OCI-LY7 (cell line): ENCODE measurements at regions of chr3 and their contacts with region 1.

Region 1: GRCh38 chr3:188421836-188422540 is 268.0 kb downstream of the LPP start:
- DNase-seq: peak; percentile 94
- H3K4me3 ChIP-seq: peak overlapping the region; percentile 53
- H3K27ac ChIP-seq: peak overlapping the region; percentile 88
- H3K4me1 ChIP-seq: peaks cover 52% of the 10 kb centered on the region
- CTCF ChIP-seq: no peak

Region 2: GRCh38 chr3:188432802-188433520 is 11.0 kb after region 1 on chr3:
- CTCF ChIA-PET with region 1: interaction called, 8 read pairs
- POLR2A ChIA-PET with region 1: interaction called, 16 read pairs
- intact Hi-C with region 1: no loop called
- DNase-seq: no peak
- H3K4me3 ChIP-seq: no peak overlapping the region
- H3K27ac ChIP-seq: no peak overlapping the region
- H3K4me1 ChIP-seq: peaks cover 18% of the 10 kb centered on the region
- CTCF ChIP-seq: no peak

Region 3: DNA sequence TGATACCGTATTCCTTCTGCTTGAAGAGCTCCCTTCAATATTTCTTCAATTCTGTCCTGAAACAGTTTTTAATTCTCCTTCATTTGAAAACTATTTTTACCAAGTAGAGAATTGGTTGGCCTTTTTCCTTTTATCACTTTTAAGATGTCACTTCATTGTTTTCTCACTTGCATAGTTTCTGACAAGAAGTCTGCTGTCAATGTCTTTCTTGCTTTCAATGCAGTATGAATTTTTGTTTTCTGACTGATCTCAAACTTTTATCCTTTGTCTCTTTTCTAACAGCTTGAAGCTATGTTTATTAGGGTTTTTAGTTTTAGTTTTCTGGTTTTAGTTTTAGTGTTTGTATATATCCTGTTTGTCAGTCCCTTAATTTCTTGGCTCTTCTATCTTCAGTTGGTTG is 385.0 kb after region 1 on chr3:
- CTCF ChIA-PET with region 1: no interaction called
- POLR2A ChIA-PET with region 1: no interaction called
- intact Hi-C with region 1: no loop called
- DNase-seq: peak; percentile 28
- H3K4me3 ChIP-seq: no peak overlapping the region
- H3K27ac ChIP-seq: no peak overlapping the region
- H3K4me1 ChIP-seq: no peaks in the 10 kb centered on the region
- CTCF ChIP-seq: no peak